Activated T-helper 2 cell treated with anti-CD3 and anti-CD28 coated beads, Interferon-gamma antibody, Interleukin-2, Interleukin-4, amounts not matched to agents 10 μg/mL and 5 μg/mL and 100 μg/mL, durations not matched to agents 14 hours and 24 hours and 36 hours (primary cell): ENCODE measurements at regions of chr6 and their contacts with region 1.

Region 1: GRCh38 chr6:114096561-114097172 is 125.7 kb upstream of the HDAC2 start:
- DNase-seq: no peak
- H3K4me3 Mint-ChIP-seq: no peak overlapping the region
- H3K27ac Mint-ChIP-seq: no peak overlapping the region
- H3K4me1 Mint-ChIP-seq: no peaks in the 10 kb centered on the region
- H3K27me3 Mint-ChIP-seq: peaks cover 4% of the 10 kb centered on the region

Region 2: GRCh38 chr6:114055349-114055748 is 41.3 kb before region 1 on chr6:
- intact Hi-C with region 1: no loop called
- DNase-seq: no peak
- H3K4me3 Mint-ChIP-seq: no peak overlapping the region
- H3K27ac Mint-ChIP-seq: no peak overlapping the region
- H3K4me1 Mint-ChIP-seq: no peaks in the 10 kb centered on the region
- H3K27me3 Mint-ChIP-seq: peaks cover 1% of the 10 kb centered on the region

Region 3: DNA sequence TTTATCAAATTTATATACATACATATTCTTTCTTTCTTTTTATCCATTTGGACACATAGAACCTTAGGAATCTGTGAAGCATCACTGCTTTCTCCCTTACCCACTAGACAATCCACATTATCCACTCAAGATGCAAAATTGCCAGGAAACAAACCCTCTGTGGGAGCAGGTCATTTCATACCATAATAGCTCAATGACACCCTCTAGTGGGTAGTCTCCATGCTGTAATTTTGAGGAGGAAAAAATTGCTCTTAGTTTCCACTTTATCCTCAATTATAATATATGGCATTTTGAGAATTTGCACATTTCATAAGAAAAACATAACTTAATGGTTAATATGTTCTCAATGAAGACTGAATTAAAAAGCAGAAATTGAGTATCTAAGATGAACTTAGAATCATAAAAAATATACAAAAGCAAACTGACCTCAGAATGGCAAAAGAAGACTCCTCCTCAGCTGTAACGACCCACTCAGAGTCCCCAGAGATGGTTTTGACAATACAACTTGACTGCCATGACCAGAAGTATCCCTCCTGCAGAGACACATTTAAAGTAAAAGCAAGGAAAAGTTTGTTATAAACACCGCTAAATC is 1800.0 kb after region 1 on chr6:
- intact Hi-C with region 1: loop called (anchors 10 kb)
- DNase-seq: no peak
- H3K4me3 Mint-ChIP-seq: no peak overlapping the region
- H3K27ac Mint-ChIP-seq: no peak overlapping the region
- H3K4me1 Mint-ChIP-seq: peaks cover 13% of the 10 kb centered on the region
- H3K27me3 Mint-ChIP-seq: no peaks in the 10 kb centered on the region